ENCODE measurements at regions of chr6 and their contacts with region 1.

Region 1: GRCh38 chr6:158213925-158214674 is 46.0 kb downstream of the GTF2H5 start:
- DNase-seq: peak; percentile 50 to 71 (median 64)
- H3K4me3 ChIP-seq: no peak overlapping the region
- H3K4me3 Mint-ChIP-seq: no peak overlapping the region
- H3K27ac ChIP-seq: no peak overlapping the region
- H3K27ac Mint-ChIP-seq: no peak overlapping the region
- H3K4me1 ChIP-seq: peaks cover 9 to 10% of the 10 kb centered on the region in 2 donors
- H3K4me1 Mint-ChIP-seq: peaks cover 12% of the 10 kb centered on the region
- H3K27me3 ChIP-seq: peaks cover 0 to 3% of the 10 kb centered on the region in 2 donors
- H3K27me3 Mint-ChIP-seq: peaks cover 6 to 10% (median 9%) of the 10 kb centered on the region in 3 donors
- CTCF ChIP-seq: peak; percentile 82

Region 2: DNA sequence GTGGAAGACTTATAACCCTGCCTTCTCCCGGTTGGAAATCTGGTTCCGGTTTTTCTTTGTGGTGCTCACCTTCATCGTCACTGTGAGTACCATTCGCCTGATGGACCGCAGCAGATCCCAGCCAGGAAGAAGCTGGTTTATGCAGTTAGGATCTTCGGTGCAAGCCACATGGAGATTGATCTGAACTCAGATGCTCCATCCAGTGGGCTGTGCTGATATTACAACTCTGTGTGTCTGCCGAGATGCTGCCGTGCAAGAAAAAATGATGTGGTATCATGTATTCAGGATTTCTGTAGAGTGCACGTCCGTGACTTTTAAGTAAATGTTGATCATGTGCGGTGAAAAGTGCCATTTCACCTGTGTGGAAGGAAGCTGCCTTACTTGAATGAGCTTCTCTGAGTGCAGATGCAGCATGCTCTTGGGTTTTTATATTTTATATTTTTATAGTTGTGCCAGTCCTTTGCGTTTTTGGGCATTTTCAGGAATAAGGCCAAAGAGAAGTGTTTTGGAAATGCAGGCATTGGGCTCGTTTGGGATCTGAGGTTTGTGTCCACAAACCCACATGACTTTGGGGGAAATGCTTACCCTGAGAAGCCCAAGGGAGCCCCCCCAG is 391.3 kb after region 1 on chr6:
- intact Hi-C with region 1: loop called in 1 of 2 experiments (anchors 10 kb)
- DNase-seq: peak; percentile 30 to 46 (median 45)
- H3K4me3 ChIP-seq: no peak overlapping the region
- H3K4me3 Mint-ChIP-seq: no peak overlapping the region
- H3K27ac ChIP-seq: no peak overlapping the region
- H3K27ac Mint-ChIP-seq: peak overlapping the region in 1 of 7 donors; percentile 32
- H3K4me1 ChIP-seq: no peaks in the 10 kb centered on the region
- H3K4me1 Mint-ChIP-seq: no peaks in the 10 kb centered on the region
- H3K27me3 ChIP-seq: no peaks in the 10 kb centered on the region
- H3K27me3 Mint-ChIP-seq: peaks cover 0 to 1% (median 0%) of the 10 kb centered on the region in 3 donors
- CTCF ChIP-seq: peak; percentile 74

Region 3: DNA sequence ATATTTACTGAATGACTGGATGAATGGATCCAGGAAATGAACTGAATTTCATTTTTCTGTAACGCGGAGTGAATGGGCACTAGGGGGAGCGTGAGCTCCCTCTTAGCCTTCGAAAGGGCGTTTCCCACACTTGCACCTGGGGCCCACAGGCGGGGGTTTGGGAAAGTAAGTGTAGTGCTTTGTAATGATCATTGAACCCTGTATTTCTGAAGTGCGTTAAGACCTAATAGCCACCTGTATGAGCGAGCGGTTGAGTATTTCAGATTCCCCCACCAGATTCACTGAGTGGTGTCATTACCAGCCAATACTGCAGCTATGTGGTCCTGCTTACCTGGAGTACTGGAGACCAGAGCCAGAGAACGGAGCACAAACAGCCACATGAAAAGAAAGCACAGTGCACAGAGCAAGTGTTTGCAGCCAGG is 446.2 kb after region 1 on chr6:
- intact Hi-C with region 1: loop called in 1 of 2 experiments (anchors 10 kb)
- DNase-seq: peak in 2 of 3 donors; percentile 23 to 37
- H3K4me3 ChIP-seq: no peak overlapping the region
- H3K4me3 Mint-ChIP-seq: no peak overlapping the region
- H3K27ac ChIP-seq: no peak overlapping the region
- H3K27ac Mint-ChIP-seq: peak overlapping the region in 2 of 7 donors; percentile 35 to 36
- H3K4me1 ChIP-seq: peaks cover 66 to 79% of the 10 kb centered on the region in 2 donors
- H3K4me1 Mint-ChIP-seq: peaks cover 75% of the 10 kb centered on the region
- H3K27me3 ChIP-seq: no peaks in the 10 kb centered on the region
- H3K27me3 Mint-ChIP-seq: peaks cover 0 to 4% (median 3%) of the 10 kb centered on the region in 3 donors
- CTCF ChIP-seq: peak; percentile 64